ENCODE measurements at regions of chr6 and their contacts with region 1.

Region 1: DNA sequence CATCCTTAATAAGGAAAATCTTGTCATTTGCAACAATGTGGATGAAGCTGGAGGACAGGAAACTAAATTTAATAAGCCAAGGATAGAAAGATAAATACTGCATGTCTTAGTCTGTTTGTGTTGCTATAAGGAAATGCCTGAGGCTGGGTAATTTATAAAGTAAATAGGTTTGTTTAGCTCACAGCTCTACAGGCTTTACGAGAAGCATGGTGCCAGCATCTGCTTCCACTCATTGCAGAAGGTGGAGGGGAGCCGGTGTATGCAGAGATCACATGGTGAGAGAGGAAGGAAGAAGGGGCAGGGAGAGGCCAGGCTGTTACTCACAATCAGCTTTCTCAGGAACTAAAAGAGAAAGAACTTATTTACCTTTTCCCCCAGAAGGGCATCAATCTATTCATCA is 118.9 kb upstream of the SMLR1 start:
- DNase-seq: peak; percentile 50
- ATAC-seq: peak; percentile 96
- H3K4me3 ChIP-seq: no peak overlapping the region
- H3K27ac ChIP-seq: no peak overlapping the region
- H3K4me1 ChIP-seq: peaks cover 2% of the 10 kb centered on the region; the same call in 1 of the 2 replicates
- H3K27me3 ChIP-seq: no peaks in the 10 kb centered on the region
- CTCF ChIP-seq: no peak
- POLR2A ChIP-seq: no peak
- RAD21 ChIP-seq: no peak

Region 2: DNA sequence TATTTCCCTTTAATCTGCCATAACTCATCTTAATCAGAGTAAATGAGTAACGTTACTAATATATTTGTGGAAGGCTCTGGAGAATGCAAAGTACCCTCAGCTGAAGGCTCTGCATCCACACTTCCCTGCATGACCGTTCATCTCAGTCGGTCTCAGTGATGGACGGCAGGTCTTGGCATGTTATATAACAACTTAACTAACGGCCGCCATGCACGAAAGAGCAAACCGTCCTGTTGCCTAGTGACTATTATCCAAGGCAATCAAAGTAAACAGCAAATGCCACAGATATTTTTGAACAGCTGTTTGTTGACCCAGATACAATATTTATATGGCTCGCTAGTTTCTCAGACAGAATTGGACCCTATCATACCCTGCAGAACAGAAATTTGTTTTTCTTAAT is 76.1 kb before region 1 on chr6:
- CTCF ChIA-PET with region 1: no interaction called
- POLR2A ChIA-PET with region 1: no interaction called
- dilution Hi-C with region 1: no loop called
- in situ Hi-C with region 1: no loop called
- intact Hi-C with region 1: no loop called
- DNase-seq: no peak
- ATAC-seq: no peak
- H3K4me3 ChIP-seq: no peak overlapping the region
- H3K27ac ChIP-seq: no peak overlapping the region
- H3K4me1 ChIP-seq: no peaks in the 10 kb centered on the region
- H3K27me3 ChIP-seq: no peaks in the 10 kb centered on the region
- CTCF ChIP-seq: no peak
- POLR2A ChIP-seq: no peak
- RAD21 ChIP-seq: no peak

Region 3: DNA sequence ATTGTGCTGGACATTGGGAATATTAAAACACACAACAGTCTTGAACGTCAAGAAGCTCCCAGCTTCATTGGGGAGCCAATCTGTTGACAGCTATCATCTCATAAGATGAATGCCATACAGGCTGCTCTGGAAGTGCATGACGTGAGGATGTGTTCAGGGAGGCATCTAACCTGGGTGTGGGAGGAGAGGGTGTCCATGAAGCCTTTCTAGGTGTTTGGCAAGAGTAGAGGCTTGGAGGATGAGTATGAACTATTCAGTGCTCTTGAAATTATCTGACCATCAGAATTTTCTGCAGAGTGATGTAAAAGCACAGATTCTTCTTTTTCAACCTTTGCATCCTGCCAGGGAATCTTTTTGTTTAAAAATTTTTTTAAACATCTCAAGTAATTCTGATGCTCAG is 438.5 kb after region 1 on chr6:
- CTCF ChIA-PET with region 1: no interaction called
- POLR2A ChIA-PET with region 1: interaction called, 19 read pairs
- dilution Hi-C with region 1: no loop called
- in situ Hi-C with region 1: no loop called
- intact Hi-C with region 1: no loop called
- DNase-seq: no peak
- ATAC-seq: no peak
- H3K4me3 ChIP-seq: no peak overlapping the region
- H3K27ac ChIP-seq: no peak overlapping the region
- H3K4me1 ChIP-seq: no peaks in the 10 kb centered on the region
- H3K27me3 ChIP-seq: no peaks in the 10 kb centered on the region
- CTCF ChIP-seq: no peak
- POLR2A ChIP-seq: no peak
- RAD21 ChIP-seq: no peak

Measured in IMR-90 (cell line).